A673 (cell line): ENCODE measurements at regions of chr5 and their contacts with region 1.

Region 1: GRCh38 chr5:109619606-109620005 is 70.1 kb upstream of the MAN2A1 start:
- DNase-seq: no peak
- H3K4me3 ChIP-seq: no peak overlapping the region
- H3K27ac ChIP-seq: no peak overlapping the region
- H3K4me1 ChIP-seq: peaks cover 42% of the 10 kb centered on the region
- H3K27me3 ChIP-seq: no peaks in the 10 kb centered on the region
- CTCF ChIP-seq: no peak

Region 2: GRCh38 chr5:109267283-109267682 is 352.3 kb before region 1 on chr5:
- CTCF ChIA-PET with region 1: no interaction called
- POLR2A ChIA-PET with region 1: no interaction called
- intact Hi-C with region 1: no loop called
- DNase-seq: no peak
- H3K4me3 ChIP-seq: no peak overlapping the region
- H3K27ac ChIP-seq: no peak overlapping the region
- H3K4me1 ChIP-seq: no peaks in the 10 kb centered on the region
- H3K27me3 ChIP-seq: no peaks in the 10 kb centered on the region
- CTCF ChIP-seq: no peak

Region 3: GRCh38 chr5:109844148-109844547 is 224.5 kb after region 1 on chr5:
- CTCF ChIA-PET with region 1: no interaction called
- POLR2A ChIA-PET with region 1: no interaction called
- intact Hi-C with region 1: loop called (anchors 10 kb)
- DNase-seq: peak; percentile 27
- H3K4me3 ChIP-seq: no peak overlapping the region
- H3K27ac ChIP-seq: no peak overlapping the region
- H3K4me1 ChIP-seq: no peaks in the 10 kb centered on the region
- H3K27me3 ChIP-seq: no peaks in the 10 kb centered on the region
- CTCF ChIP-seq: peak; percentile 46; the same call in 1 of the 2 replicates

Region 4: DNA sequence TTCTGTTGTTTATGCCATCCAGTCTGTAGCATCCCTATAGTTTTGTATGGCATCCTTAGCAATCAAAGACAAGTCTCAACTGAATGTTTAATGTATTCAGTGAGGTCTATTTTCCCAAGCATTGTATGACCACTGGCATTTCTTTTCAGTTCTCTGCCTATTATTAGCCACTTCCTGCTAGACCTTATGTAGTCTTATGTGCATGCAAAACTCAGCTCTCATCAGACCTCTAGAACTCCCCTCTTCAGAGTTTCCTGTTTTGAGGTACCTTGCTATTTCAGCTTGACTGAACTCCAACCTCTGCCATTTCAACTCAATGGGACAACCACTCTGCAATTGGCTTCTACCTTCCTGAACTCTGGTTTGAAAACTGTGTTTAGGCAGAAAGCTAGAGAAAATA is 1232.4 kb after region 1 on chr5:
- CTCF ChIA-PET with region 1: no interaction called
- POLR2A ChIA-PET with region 1: no interaction called
- intact Hi-C with region 1: no loop called
- DNase-seq: no peak
- H3K4me3 ChIP-seq: no peak overlapping the region
- H3K27ac ChIP-seq: no peak overlapping the region
- H3K4me1 ChIP-seq: no peaks in the 10 kb centered on the region
- H3K27me3 ChIP-seq: no peaks in the 10 kb centered on the region
- CTCF ChIP-seq: no peak